K562 (cell line): ENCODE measurements at regions of chr6 and their contacts with region 1.

Region 1: GRCh38 chr6:26196846-26197648 is 109.8 kb downstream of the HFE start:
- DNase-seq: peak; percentile 89 to 93 (median 90)
- ATAC-seq: peak; percentile 53
- H3K4me3 ChIP-seq: peak overlapping the region; percentile 86
- H3K27ac ChIP-seq: peak overlapping the region; percentile 99
- H3K4me1 ChIP-seq: peaks cover 7 to 13% of the 10 kb centered on the region in 2 experiments
- H3K27me3 ChIP-seq: no peaks in the 10 kb centered on the region
- CTCF ChIP-seq: 0 out of 6 replicates have a peak, but pooled peaks of 1 of the 3 experiments have one; percentile 19
- EP300 ChIP-seq: peak; percentile 43
- POLR2A ChIP-seq: peak; percentile 97
- RAD21 ChIP-seq: 0 out of 4 replicates have a peak, but pooled peaks of 1 of the 2 experiments have one; percentile 8

Region 2: GRCh38 chr6:25612666-25613065 is 584.4 kb before region 1 on chr6:
- CTCF ChIA-PET with region 1: no interaction called
- POLR2A ChIA-PET with region 1: no interaction called
- in situ Hi-C with region 1: no loop called
- intact Hi-C with region 1: no loop called
- DNase-seq: no peak
- ATAC-seq: no peak
- H3K4me3 ChIP-seq: no peak overlapping the region
- H3K27ac ChIP-seq: no peak overlapping the region
- H3K4me1 ChIP-seq: peaks cover 0 to 8% of the 10 kb centered on the region in 2 experiments; a peak in 2 of 5 replicates
- H3K27me3 ChIP-seq: peaks cover 2 to 4% of the 10 kb centered on the region in 2 experiments; a peak in 3 of 5 replicates
- CTCF ChIP-seq: no peak
- EP300 ChIP-seq: no peak
- POLR2A ChIP-seq: no peak
- RAD21 ChIP-seq: no peak

Region 3: DNA sequence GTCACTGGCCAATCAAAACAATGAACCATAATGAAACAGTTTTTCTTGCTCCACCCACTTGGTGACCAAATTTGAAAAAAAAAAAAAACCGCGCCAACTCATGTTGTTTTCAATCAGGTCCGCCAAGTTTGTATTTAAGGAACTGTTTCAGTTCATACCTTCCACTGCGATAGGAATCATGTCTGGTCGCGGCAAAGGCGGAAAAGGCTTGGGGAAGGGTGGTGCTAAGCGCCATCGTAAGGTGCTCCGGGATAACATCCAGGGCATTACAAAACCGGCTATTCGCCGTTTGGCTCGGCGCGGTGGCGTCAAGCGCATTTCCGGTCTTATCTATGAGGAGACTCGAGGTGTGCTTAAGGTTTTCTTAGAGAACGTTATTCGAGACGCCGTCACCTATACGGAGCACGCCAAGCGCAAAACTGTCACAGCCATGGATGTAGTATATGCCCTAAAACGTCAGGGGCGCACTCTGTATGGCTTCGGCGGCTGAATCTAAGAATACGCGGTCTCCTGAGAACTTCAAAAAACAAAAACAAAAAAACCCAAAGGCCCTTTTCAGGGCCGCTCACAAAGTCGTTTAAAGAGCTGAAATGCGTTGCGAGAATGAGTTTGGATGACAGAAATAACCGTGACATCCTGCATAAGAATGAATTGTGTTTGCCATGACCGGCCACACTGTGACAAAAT is 93.1 kb before region 1 on chr6:
- CTCF ChIA-PET with region 1: no interaction called
- POLR2A ChIA-PET with region 1: interaction called, 48 read pairs
- in situ Hi-C with region 1: no loop called
- intact Hi-C with region 1: no loop called
- DNase-seq: peak; percentile 78 to 98 (median 86)
- ATAC-seq: peak; percentile 91
- H3K4me3 ChIP-seq: peak overlapping the region; percentile 30
- H3K27ac ChIP-seq: peak overlapping the region; percentile 92
- H3K4me1 ChIP-seq: peaks cover 3 to 20% of the 10 kb centered on the region in 2 experiments; a peak in 3 of 5 replicates
- H3K27me3 ChIP-seq: no peaks in the 10 kb centered on the region
- CTCF ChIP-seq: peak; percentile 53 to 71 (median 61)
- EP300 ChIP-seq: peak; percentile 96
- POLR2A ChIP-seq: peak; percentile 100
- RAD21 ChIP-seq: peak; percentile 29 to 46; a peak in 3 of 4 replicates

Region 4: DNA sequence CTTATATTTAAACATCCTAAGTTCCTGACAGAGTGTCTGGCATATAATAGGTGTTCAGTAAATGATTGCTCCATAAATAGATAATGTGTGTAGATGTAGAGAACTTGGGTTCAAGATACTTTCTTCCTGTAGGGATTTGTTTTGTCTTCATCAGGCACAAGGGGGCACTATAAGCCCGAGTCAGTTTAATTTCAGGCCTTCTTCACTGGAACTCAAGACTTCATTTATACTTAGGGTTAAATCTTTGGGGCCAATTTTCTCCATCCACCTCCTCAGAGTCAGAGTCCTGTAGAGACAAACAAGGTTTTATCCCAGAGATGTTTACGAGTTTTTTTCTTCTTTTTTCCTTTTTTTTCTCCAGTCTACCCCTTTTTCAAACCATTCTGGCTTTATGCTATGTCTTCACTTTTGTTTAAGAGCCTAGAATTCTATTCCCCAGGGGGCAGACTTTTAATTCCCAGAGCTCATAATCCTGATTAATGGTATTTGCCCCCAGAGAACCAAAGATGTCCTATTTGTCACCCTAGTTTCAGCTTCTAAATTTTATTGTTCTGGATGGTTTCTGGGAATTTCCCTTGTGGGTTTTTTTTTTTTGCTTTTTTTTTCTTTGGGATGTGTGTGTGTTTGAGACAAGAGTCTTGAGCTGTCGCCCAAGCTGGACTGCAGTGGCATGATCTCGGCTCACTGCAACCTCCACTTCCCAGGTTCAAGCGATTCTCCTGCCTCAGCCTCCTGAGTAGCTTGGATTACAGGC is 21.4 kb before region 1 on chr6:
- CTCF ChIA-PET with region 1: interaction called, 3 read pairs
- POLR2A ChIA-PET with region 1: interaction called, 323 read pairs
- in situ Hi-C with region 1: no loop called
- intact Hi-C with region 1: no loop called
- DNase-seq: peak; percentile 60 to 88 (median 71)
- ATAC-seq: peak; percentile 41
- H3K4me3 ChIP-seq: no peak overlapping the region
- H3K27ac ChIP-seq: no peak overlapping the region
- H3K4me1 ChIP-seq: peaks cover 14% of the 10 kb centered on the region in 2 experiments
- H3K27me3 ChIP-seq: no peaks in the 10 kb centered on the region
- CTCF ChIP-seq: peak; percentile 59 to 87 (median 77)
- EP300 ChIP-seq: no peak; the same call in 1 of the 2 replicates
- POLR2A ChIP-seq: no peak
- RAD21 ChIP-seq: peak; percentile 87 to 88

Region 5: DNA sequence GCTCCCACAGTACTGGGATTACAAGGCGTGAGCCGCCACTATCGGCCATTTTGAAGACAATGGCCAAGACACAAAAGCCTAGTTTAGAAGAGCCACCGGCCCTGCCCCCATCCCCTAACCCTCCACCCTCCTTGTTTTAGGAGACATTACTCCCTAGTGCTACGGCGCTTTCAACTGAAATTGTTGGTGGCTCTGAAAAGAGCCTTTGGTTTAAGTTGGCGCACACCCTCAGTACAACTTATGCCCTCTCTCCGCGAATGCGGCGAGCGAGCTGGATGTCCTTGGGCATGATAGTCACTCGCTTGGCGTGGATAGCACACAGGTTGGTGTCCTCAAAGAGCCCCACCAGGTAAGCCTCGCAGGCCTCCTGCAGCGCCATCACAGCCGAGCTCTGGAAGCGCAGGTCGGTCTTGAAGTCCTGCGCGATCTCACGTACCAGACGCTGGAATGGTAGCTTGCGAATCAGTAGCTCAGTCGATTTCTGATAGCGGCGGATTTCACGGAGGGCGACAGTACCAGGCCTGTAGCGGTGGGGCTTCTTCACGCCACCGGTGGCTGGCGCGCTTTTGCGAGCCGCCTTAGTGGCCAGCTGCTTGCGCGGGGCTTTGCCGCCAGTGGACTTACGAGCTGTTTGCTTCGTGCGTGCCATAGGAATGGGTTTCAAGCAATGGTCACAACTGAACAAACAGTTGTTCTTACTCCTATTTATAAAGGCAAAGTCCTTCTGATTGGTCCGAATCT is 53.1 kb after region 1 on chr6:
- CTCF ChIA-PET with region 1: no interaction called
- POLR2A ChIA-PET with region 1: interaction called, 63 read pairs
- in situ Hi-C with region 1: no loop called
- intact Hi-C with region 1: no loop called
- DNase-seq: peak; percentile 39 to 86 (median 51)
- ATAC-seq: peak; percentile 73
- H3K4me3 ChIP-seq: peak overlapping the region; percentile 43
- H3K27ac ChIP-seq: peak overlapping the region; percentile 91
- H3K4me1 ChIP-seq: peaks cover 5 to 12% of the 10 kb centered on the region in 2 experiments; a peak in 3 of 5 replicates
- H3K27me3 ChIP-seq: no peaks in the 10 kb centered on the region
- CTCF ChIP-seq: peak; percentile 27 to 63 (median 42); a peak in 5 of 6 replicates
- EP300 ChIP-seq: 0 out of 2 replicates have a peak, but pooled peaks have one; percentile 28
- POLR2A ChIP-seq: peak; percentile 95
- RAD21 ChIP-seq: no peak; a peak in 2 of 4 replicates

Region 6: GRCh38 chr6:26295691-26296555 is 98.9 kb after region 1 on chr6:
- CTCF ChIA-PET with region 1: no interaction called
- POLR2A ChIA-PET with region 1: interaction called, 23 read pairs
- in situ Hi-C with region 1: no loop called
- intact Hi-C with region 1: no loop called
- DNase-seq: peak; percentile 75 to 95 (median 79)
- ATAC-seq: peak; percentile 63
- H3K4me3 ChIP-seq: no peak overlapping the region
- H3K27ac ChIP-seq: peak overlapping the region; percentile 86
- H3K4me1 ChIP-seq: peaks cover 0 to 45% of the 10 kb centered on the region in 2 experiments; a peak in 4 of 5 replicates
- H3K27me3 ChIP-seq: no peaks in the 10 kb centered on the region
- CTCF ChIP-seq: no peak
- EP300 ChIP-seq: peak; percentile 97
- POLR2A ChIP-seq: no peak
- RAD21 ChIP-seq: peak; percentile 15 to 46; a peak in 2 of 4 replicates

Region 7: GRCh38 chr6:26568601-26569432 is 371.8 kb after region 1 on chr6:
- CTCF ChIA-PET with region 1: no interaction called
- POLR2A ChIA-PET with region 1: interaction called, 9 read pairs
- in situ Hi-C with region 1: loop called (anchors 25 kb)
- intact Hi-C with region 1: no loop called
- DNase-seq: peak; percentile 82 to 96 (median 84)
- ATAC-seq: peak; percentile 75
- H3K4me3 ChIP-seq: peak overlapping the region; percentile 75
- H3K27ac ChIP-seq: peak overlapping the region; percentile 92
- H3K4me1 ChIP-seq: peaks cover 3 to 8% of the 10 kb centered on the region in 2 experiments; a peak in 2 of 5 replicates
- H3K27me3 ChIP-seq: no peaks in the 10 kb centered on the region
- CTCF ChIP-seq: peak; percentile 80 to 83 (median 81)
- EP300 ChIP-seq: peak; percentile 76
- POLR2A ChIP-seq: peak; percentile 24; the same call in 1 of the 2 replicates
- RAD21 ChIP-seq: peak; percentile 88 to 90